Naive thymus-derived CD4-positive, alpha-beta T cell (primary cell): ENCODE measurements at regions of chr19 and their contacts with region 1.

Region 1: GRCh38 chr19:32570081-32570785 is 10.8 kb upstream of the PDCD5 start:
- DNase-seq: peak in 8 of 9 donors; percentile 31 to 64 (median 53)
- ATAC-seq: peak; percentile 91
- H3K4me3 ChIP-seq: no peak overlapping the region
- H3K4me3 Mint-ChIP-seq: peak overlapping the region in 5 of 10 donors; percentile 39 to 45 (median 40)
- H3K27ac ChIP-seq: no peak overlapping the region
- H3K27ac Mint-ChIP-seq: peak overlapping the region in 2 of 9 donors; percentile 11 to 43
- H3K4me1 ChIP-seq: no peaks in the 10 kb centered on the region
- H3K4me1 Mint-ChIP-seq: peaks cover 10 to 21% (median 16%) of the 10 kb centered on the region in 7 donors
- H3K27me3 ChIP-seq: no peaks in the 10 kb centered on the region
- H3K27me3 Mint-ChIP-seq: peaks cover 3 to 9% (median 8%) of the 10 kb centered on the region in 5 donors

Region 2: GRCh38 chr19:32339988-32340874 is 230.0 kb before region 1 on chr19:
- CTCF ChIA-PET with region 1: interaction called, 8 read pairs
- POLR2A ChIA-PET with region 1: no interaction called
- intact Hi-C with region 1: loop called in 1 of 2 experiments (anchors 1 kb)
- DNase-seq: peak; percentile 12 to 39 (median 26)
- ATAC-seq: peak; percentile 87
- H3K4me3 ChIP-seq: no peak overlapping the region
- H3K4me3 Mint-ChIP-seq: no peak overlapping the region
- H3K27ac ChIP-seq: no peak overlapping the region
- H3K27ac Mint-ChIP-seq: no peak overlapping the region
- H3K4me1 ChIP-seq: no peaks in the 10 kb centered on the region
- H3K4me1 Mint-ChIP-seq: peaks cover 0 to 4% (median 0%) of the 10 kb centered on the region in 7 donors
- H3K27me3 ChIP-seq: no peaks in the 10 kb centered on the region
- H3K27me3 Mint-ChIP-seq: peaks cover 0 to 15% (median 5%) of the 10 kb centered on the region in 5 donors

Region 3: GRCh38 chr19:32464279-32464678 is 106.0 kb before region 1 on chr19:
- CTCF ChIA-PET with region 1: no interaction called
- POLR2A ChIA-PET with region 1: no interaction called
- intact Hi-C with region 1: loop called (anchors 1 kb)
- DNase-seq: peak in 2 of 9 donors; percentile 1 to 13
- ATAC-seq: no peak
- H3K4me3 ChIP-seq: no peak overlapping the region
- H3K4me3 Mint-ChIP-seq: no peak overlapping the region
- H3K27ac ChIP-seq: no peak overlapping the region
- H3K27ac Mint-ChIP-seq: no peak overlapping the region
- H3K4me1 ChIP-seq: no peaks in the 10 kb centered on the region
- H3K4me1 Mint-ChIP-seq: peaks cover 0 to 4% (median 0%) of the 10 kb centered on the region in 7 donors
- H3K27me3 ChIP-seq: no peaks in the 10 kb centered on the region
- H3K27me3 Mint-ChIP-seq: no peaks in the 10 kb centered on the region

Region 4: GRCh38 chr19:32662186-32662585 is 92.0 kb after region 1 on chr19:
- CTCF ChIA-PET with region 1: no interaction called
- POLR2A ChIA-PET with region 1: no interaction called
- intact Hi-C with region 1: no loop called
- DNase-seq: no peak
- ATAC-seq: no peak
- H3K4me3 ChIP-seq: no peak overlapping the region
- H3K4me3 Mint-ChIP-seq: no peak overlapping the region
- H3K27ac ChIP-seq: no peak overlapping the region
- H3K27ac Mint-ChIP-seq: peak overlapping the region in 1 of 9 donors; percentile 12
- H3K4me1 ChIP-seq: no peaks in the 10 kb centered on the region
- H3K4me1 Mint-ChIP-seq: peaks cover 0 to 14% (median 10%) of the 10 kb centered on the region in 7 donors
- H3K27me3 ChIP-seq: no peaks in the 10 kb centered on the region
- H3K27me3 Mint-ChIP-seq: no peaks in the 10 kb centered on the region